ENCODE measurements at regions of chr3 and their contacts with region 1.

Region 1: GRCh38 chr3:63911873-63912767 is at the start of gene SCAANT1:
- DNase-seq: peak; percentile 82
- H3K4me3 ChIP-seq: peak within 1 kb of the TSS; percentile 82
- H3K27ac ChIP-seq: peak within 1 kb of the TSS; percentile 75
- H3K4me1 ChIP-seq: peaks cover 25% of the 10 kb centered on the region
- CTCF ChIP-seq: 0 out of 2 replicates have a peak, but pooled peaks have one; percentile 6
- total RNA-seq, gene SCAANT1: not detected in 2 replicates

Region 2: DNA sequence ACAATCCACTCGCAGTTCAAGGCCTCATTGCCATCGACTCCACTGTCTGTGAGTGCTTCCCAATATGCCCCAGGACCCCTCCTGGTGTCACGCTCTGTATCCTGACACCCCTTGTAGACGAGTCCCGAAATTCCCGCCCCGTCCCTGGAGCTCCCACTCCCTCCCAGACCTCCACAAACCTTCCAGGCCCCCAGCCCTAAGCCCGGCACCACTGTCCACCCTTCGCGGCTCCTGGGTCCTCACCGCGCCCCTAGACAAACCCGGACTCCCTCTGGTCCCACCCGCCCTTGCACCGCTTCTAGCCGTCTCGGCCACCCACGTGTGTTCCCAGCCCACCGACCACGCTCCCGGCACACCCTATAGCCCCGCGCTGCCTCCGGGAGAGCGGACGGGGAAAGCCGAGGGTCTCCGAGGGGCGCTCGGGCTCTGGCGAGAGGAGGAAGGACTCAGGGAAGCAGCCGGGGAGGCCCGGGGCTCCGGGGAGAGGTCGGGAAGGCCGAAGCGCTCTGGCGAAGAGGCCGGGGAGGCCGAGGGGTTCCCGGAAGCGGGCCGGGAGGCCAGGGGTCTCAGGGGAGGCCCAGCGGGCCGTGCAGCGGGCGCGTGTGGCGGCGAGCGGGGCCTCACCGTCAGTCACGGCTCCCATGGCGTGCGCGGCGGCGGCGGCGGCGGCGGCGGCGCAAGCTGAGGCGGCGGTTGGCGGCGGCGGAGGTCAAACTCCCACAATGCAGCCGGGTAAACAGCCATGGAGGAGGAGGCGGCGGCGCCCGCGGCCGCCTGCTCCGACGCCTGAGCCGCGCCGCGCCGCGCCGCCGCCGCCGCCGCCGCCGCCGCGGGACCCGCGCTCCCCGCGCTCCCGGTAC is 48.7 kb before region 1 on chr3 and contains the starts of genes ATXN7 and THOC7:
- CTCF ChIA-PET with region 1: no interaction called
- POLR2A ChIA-PET with region 1: no interaction called
- intact Hi-C with region 1: loop called (anchors 5 kb)
- DNase-seq: peak; percentile 72
- H3K4me3 ChIP-seq: peak within 1 kb of the TSS; percentile 95
- H3K27ac ChIP-seq: peak within 1 kb of the TSS; percentile 71
- H3K4me1 ChIP-seq: peaks cover 21% of the 10 kb centered on the region
- CTCF ChIP-seq: no peak
- total RNA-seq, gene ATXN7: 14.3 and 15.2 TPM in 2 replicates
- total RNA-seq, gene THOC7: 62.2 and 62.9 TPM in 2 replicates

Region 3: GRCh38 chr3:63870615-63871215 is 41.4 kb before region 1 on chr3:
- CTCF ChIA-PET with region 1: no interaction called
- POLR2A ChIA-PET with region 1: interaction called, 4 read pairs
- intact Hi-C with region 1: loop called (anchors 2 kb)
- DNase-seq: no peak
- H3K4me3 ChIP-seq: peak overlapping the region; percentile 9
- H3K27ac ChIP-seq: no peak overlapping the region
- H3K4me1 ChIP-seq: peaks cover 41% of the 10 kb centered on the region
- CTCF ChIP-seq: no peak

Region 4: GRCh38 chr3:63993653-63994079 is 81.5 kb after region 1 on chr3:
- CTCF ChIA-PET with region 1: no interaction called
- POLR2A ChIA-PET with region 1: no interaction called
- intact Hi-C with region 1: loop called (anchors 5 kb)
- DNase-seq: peak; percentile 69
- H3K4me3 ChIP-seq: no peak overlapping the region
- H3K27ac ChIP-seq: no peak overlapping the region
- H3K4me1 ChIP-seq: no peaks in the 10 kb centered on the region
- CTCF ChIP-seq: peak; percentile 88